CD4-positive, alpha-beta memory T cell (primary cell): ENCODE measurements at regions of chr12 and their contacts with region 1.

Region 1: GRCh38 chr12:121230538-121230907 is 20.6 kb downstream of the P2RX4 start:
- DNase-seq: no peak
- H3K4me3 ChIP-seq: no peak overlapping the region
- H3K4me3 Mint-ChIP-seq: no peak overlapping the region
- H3K27ac ChIP-seq: no peak overlapping the region
- H3K27ac Mint-ChIP-seq: peak overlapping the region in 6 of 7 donors; percentile 59 to 82 (median 71)
- H3K4me1 ChIP-seq: peaks cover 37% of the 10 kb centered on the region
- H3K4me1 Mint-ChIP-seq: peaks cover 12 to 32% (median 26%) of the 10 kb centered on the region in 4 donors
- H3K27me3 ChIP-seq: no peaks in the 10 kb centered on the region
- H3K27me3 Mint-ChIP-seq: no peaks in the 10 kb centered on the region

Region 2: DNA sequence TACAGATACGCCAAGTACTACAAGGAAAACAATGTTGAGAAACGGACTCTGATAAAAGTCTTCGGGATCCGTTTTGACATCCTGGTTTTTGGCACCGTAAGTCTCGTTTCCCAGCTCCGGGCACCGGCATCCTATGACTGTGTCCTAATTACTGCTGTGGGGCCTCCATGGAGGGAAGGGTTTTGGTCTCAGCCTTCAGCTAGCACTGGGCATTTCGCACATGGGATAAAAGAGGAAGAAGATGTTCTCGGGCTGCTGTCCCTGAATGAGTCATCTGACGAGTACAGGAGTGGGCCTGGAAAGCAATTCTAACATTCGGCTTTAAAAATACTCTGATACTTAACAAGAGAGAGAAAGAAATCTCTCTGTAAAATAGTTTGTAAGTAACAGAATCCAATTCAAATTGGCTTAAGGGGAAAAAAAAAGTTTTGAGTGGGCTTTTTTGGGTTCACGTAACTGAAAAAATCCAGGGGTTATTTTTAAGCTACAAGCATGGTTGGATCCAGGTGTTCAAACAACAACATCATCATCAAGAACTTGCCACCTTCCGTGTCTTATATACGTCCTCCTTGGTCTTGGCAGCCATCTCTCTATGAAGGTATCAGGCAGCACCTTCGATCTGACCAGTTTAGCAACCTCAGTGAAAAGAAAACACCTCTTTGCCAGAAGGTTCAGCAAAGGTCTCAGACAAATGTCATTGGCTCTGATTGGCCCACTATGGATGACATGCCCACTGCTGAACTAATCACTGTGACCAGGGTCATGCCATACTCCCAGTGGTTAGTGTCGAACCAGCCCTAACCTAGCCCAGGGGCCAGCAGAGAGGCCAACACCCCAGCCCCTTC is 54.9 kb before region 1 on chr12:
- CTCF ChIA-PET with region 1: no interaction called
- POLR2A ChIA-PET with region 1: no interaction called
- intact Hi-C with region 1: no loop called
- DNase-seq: no peak
- H3K4me3 ChIP-seq: no peak overlapping the region
- H3K4me3 Mint-ChIP-seq: no peak overlapping the region
- H3K27ac ChIP-seq: no peak overlapping the region
- H3K27ac Mint-ChIP-seq: no peak overlapping the region
- H3K4me1 ChIP-seq: no peaks in the 10 kb centered on the region
- H3K4me1 Mint-ChIP-seq: no peaks in the 10 kb centered on the region
- H3K27me3 ChIP-seq: no peaks in the 10 kb centered on the region
- H3K27me3 Mint-ChIP-seq: no peaks in the 10 kb centered on the region

Region 3: GRCh38 chr12:121214855-121215745 is 15.4 kb before region 1 on chr12:
- CTCF ChIA-PET with region 1: interaction called, 10 read pairs
- POLR2A ChIA-PET with region 1: interaction called, 4 read pairs
- intact Hi-C with region 1: no loop called
- DNase-seq: no peak
- H3K4me3 ChIP-seq: no peak overlapping the region
- H3K4me3 Mint-ChIP-seq: peak overlapping the region in 5 of 8 donors; percentile 7 to 60 (median 27)
- H3K27ac ChIP-seq: peak overlapping the region; percentile 42
- H3K27ac Mint-ChIP-seq: peak overlapping the region; percentile 68 to 91 (median 77)
- H3K4me1 ChIP-seq: peaks cover 46% of the 10 kb centered on the region
- H3K4me1 Mint-ChIP-seq: peaks cover 19 to 50% (median 34%) of the 10 kb centered on the region in 4 donors
- H3K27me3 ChIP-seq: no peaks in the 10 kb centered on the region
- H3K27me3 Mint-ChIP-seq: no peaks in the 10 kb centered on the region

Region 4: GRCh38 chr12:121240484-121241101 is 10.1 kb after region 1 on chr12:
- CTCF ChIA-PET with region 1: interaction called, 57 read pairs
- POLR2A ChIA-PET with region 1: interaction called, 89 read pairs
- intact Hi-C with region 1: no loop called
- DNase-seq: peak; percentile 94 to 98 (median 95)
- H3K4me3 ChIP-seq: peak overlapping the region; percentile 47 to 54
- H3K4me3 Mint-ChIP-seq: peak overlapping the region; percentile 82 to 92 (median 90)
- H3K27ac ChIP-seq: peak overlapping the region; percentile 76
- H3K27ac Mint-ChIP-seq: peak overlapping the region; percentile 95 to 100 (median 99)
- H3K4me1 ChIP-seq: peaks cover 38% of the 10 kb centered on the region
- H3K4me1 Mint-ChIP-seq: peaks cover 26 to 55% (median 38%) of the 10 kb centered on the region in 4 donors
- H3K27me3 ChIP-seq: no peaks in the 10 kb centered on the region
- H3K27me3 Mint-ChIP-seq: no peaks in the 10 kb centered on the region